Activated naive CD4-positive, alpha-beta T cell treated with anti-CD3 and anti-CD28 coated beads for 36 hours (primary cell): ENCODE measurements at regions of chr2 and their contacts with region 1.

Region 1: DNA sequence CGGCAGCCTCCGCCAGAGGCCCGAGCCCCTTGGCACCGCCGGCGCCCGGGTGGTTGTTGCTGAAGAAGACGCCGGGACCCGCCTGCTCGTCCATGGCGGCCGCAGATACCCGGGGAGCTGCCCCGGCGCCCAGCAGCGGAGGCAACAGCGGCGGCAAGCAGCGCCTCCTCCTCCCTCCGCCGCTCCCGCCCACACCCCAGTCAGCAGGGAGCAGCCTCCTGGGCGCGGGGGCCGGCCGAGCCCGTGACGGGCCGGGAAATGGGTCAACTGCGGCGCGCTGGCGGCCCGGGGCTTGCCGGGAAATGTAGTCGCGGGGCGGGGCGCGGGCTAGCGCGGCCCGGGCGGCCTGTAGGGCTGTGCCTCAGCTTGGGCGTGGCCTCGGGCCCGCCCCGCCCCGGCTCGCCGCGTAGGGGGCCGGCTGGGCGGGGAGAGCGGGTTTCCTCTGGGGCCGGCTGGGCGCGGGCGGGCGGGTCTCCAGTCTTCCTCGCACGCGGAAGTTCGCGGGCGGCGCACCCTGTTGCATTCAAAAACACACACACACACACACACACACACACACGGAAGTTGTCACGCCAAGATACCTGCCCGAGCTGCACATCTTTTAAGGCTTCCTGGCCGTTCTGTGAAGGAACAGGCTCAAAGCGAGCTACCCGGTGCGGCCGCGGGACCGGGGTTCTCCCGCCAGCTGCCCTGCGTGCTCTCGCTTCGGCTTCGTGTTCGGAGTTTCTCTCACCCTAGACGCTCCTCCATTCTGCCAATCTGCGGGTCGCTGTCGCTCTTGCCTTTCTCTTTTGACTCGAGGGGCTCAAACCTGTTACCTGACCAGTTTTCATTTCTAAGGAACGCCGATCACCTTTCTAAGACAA is at the start of gene STRN:
- DNase-seq: peak; percentile 96
- H3K4me3 Mint-ChIP-seq: peak within 1 kb of the TSS; percentile 94
- H3K27ac Mint-ChIP-seq: peak within 1 kb of the TSS; percentile 90
- H3K4me1 Mint-ChIP-seq: peaks cover 33% of the 10 kb centered on the region
- H3K27me3 Mint-ChIP-seq: no peaks in the 10 kb centered on the region
- total RNA-seq, gene STRN: 19.3 to 22.2 TPM

Region 2: GRCh38 chr2:36889795-36890194 is 76.8 kb before region 1 on chr2:
- CTCF ChIA-PET with region 1: no interaction called
- intact Hi-C with region 1: loop called (anchors 1 kb)
- DNase-seq: peak; percentile 16
- H3K4me3 Mint-ChIP-seq: no peak overlapping the region
- H3K27ac Mint-ChIP-seq: peak overlapping the region; percentile 40
- H3K4me1 Mint-ChIP-seq: peaks cover 10% of the 10 kb centered on the region
- H3K27me3 Mint-ChIP-seq: no peaks in the 10 kb centered on the region

Region 3: GRCh38 chr2:36993841-36994620 is 27.4 kb after region 1 on chr2:
- CTCF ChIA-PET with region 1: no interaction called
- intact Hi-C with region 1: no loop called
- DNase-seq: no peak
- H3K4me3 Mint-ChIP-seq: no peak overlapping the region
- H3K27ac Mint-ChIP-seq: no peak overlapping the region
- H3K4me1 Mint-ChIP-seq: no peaks in the 10 kb centered on the region
- H3K27me3 Mint-ChIP-seq: no peaks in the 10 kb centered on the region

Region 4: GRCh38 chr2:37083873-37084794 is 117.5 kb after region 1 on chr2 and contains the starts of genes GPATCH11 and HEATR5B:
- CTCF ChIA-PET with region 1: no interaction called
- intact Hi-C with region 1: loop called (anchors 1 kb)
- DNase-seq: peak; percentile 93
- H3K4me3 Mint-ChIP-seq: no peak within 1 kb of the TSS
- H3K27ac Mint-ChIP-seq: no peak within 1 kb of the TSS
- H3K4me1 Mint-ChIP-seq: peaks cover 26% of the 10 kb centered on the region
- H3K27me3 Mint-ChIP-seq: no peaks in the 10 kb centered on the region
- total RNA-seq, gene GPATCH11: 9.8 to 10.4 TPM
- total RNA-seq, gene HEATR5B: 15.5 to 15.8 TPM

Region 5: GRCh38 chr2:37196320-37197195 is 230.0 kb after region 1 on chr2 and contains the start of gene CEBPZOS:
- CTCF ChIA-PET with region 1: no interaction called
- intact Hi-C with region 1: loop called (anchors 1 kb)
- DNase-seq: peak; percentile 93
- H3K4me3 Mint-ChIP-seq: peak within 1 kb of the TSS; percentile 98
- H3K27ac Mint-ChIP-seq: peak within 1 kb of the TSS; percentile 97
- H3K4me1 Mint-ChIP-seq: peaks cover 23% of the 10 kb centered on the region
- H3K27me3 Mint-ChIP-seq: no peaks in the 10 kb centered on the region
- total RNA-seq, gene CEBPZOS: 30.3 to 30.7 TPM

Region 6: GRCh38 chr2:37648331-37649011 is 681.9 kb after region 1 on chr2:
- CTCF ChIA-PET with region 1: no interaction called
- intact Hi-C with region 1: no loop called
- DNase-seq: peak; percentile 60
- H3K4me3 Mint-ChIP-seq: peak overlapping the region; percentile 25
- H3K27ac Mint-ChIP-seq: peak overlapping the region; percentile 78
- H3K4me1 Mint-ChIP-seq: peaks cover 67% of the 10 kb centered on the region
- H3K27me3 Mint-ChIP-seq: no peaks in the 10 kb centered on the region